Sigmoid colon (tissue), 7 donors: ENCODE measurements at regions of chr19 and their contacts with region 1.

Region 1: DNA sequence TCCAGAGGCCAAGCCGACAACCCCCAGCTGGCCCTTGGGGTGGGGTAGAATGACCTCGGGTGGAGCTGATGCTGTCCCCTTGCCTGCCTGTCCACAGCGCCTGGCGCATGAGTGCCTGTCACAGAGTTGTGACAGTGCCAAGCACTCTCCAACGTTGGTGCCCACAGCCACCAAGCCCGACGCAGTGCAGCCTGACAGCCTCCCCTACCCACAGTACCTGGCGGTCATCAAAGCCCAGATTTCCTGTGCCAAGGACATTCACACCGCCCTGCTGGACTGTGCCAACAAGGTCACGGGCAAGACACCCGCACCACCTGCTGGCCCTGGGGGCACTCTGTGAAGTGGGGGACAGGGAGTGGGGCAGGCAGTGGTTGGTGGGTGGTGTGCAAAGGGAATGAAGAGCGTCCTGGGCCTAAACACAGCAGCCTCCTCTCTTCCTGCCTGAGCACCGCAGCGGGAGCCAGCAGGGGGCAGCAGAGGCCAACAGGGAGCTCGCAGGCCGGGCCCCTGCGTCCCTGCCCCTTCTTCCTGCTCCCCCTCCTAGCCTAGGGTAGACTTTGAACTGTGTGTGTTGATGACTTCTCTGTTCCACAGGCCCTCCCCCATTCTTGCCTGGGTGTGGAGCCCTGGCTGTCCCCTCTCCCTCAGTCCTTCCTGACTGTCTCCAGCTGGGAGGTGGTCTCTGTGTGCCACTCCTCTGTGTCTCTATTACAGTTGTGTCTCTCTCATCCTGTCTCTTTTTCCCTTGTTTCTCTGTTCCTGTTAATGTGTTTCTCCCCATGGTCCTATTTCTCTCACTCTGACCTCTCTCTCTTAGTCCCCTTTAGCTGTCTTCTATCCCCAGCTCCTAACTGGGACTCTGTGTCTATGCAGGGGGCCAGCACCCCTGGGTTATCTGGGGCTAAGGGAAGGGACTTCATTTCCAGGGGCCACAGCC is 6.5 kb downstream of the MED29 start:
- DNase-seq: peak; percentile 96
- H3K4me3 ChIP-seq: no peak overlapping the region
- H3K27ac ChIP-seq: peak overlapping the region; percentile 91 to 100 (median 100)
- H3K4me1 ChIP-seq: peaks cover 0 to 41% (median 38%) of the 10 kb centered on the region in 4 donors
- H3K27me3 ChIP-seq: no peaks in the 10 kb centered on the region
- CTCF ChIP-seq: peak in 3 of 4 experiments; percentile 97 to 98 (median 97)
- EP300 ChIP-seq: no peak
- POLR2A ChIP-seq: peak in 1 of 2 donors; percentile 48

Region 2: GRCh38 chr19:38658462-38659306 is 738.9 kb before region 1 on chr19:
- intact Hi-C with region 1: loop called (anchors 10 kb)
- DNase-seq: peak; percentile 81
- H3K4me3 ChIP-seq: peak overlapping the region in 1 of 4 donors; percentile 11
- H3K27ac ChIP-seq: peak overlapping the region; percentile 96 to 100 (median 98)
- H3K4me1 ChIP-seq: peaks cover 0 to 96% (median 96%) of the 10 kb centered on the region in 4 donors
- H3K27me3 ChIP-seq: no peaks in the 10 kb centered on the region
- CTCF ChIP-seq: no peak
- EP300 ChIP-seq: peak in 3 of 4 donors; percentile 32 to 90 (median 47)
- POLR2A ChIP-seq: no peak

Region 3: DNA sequence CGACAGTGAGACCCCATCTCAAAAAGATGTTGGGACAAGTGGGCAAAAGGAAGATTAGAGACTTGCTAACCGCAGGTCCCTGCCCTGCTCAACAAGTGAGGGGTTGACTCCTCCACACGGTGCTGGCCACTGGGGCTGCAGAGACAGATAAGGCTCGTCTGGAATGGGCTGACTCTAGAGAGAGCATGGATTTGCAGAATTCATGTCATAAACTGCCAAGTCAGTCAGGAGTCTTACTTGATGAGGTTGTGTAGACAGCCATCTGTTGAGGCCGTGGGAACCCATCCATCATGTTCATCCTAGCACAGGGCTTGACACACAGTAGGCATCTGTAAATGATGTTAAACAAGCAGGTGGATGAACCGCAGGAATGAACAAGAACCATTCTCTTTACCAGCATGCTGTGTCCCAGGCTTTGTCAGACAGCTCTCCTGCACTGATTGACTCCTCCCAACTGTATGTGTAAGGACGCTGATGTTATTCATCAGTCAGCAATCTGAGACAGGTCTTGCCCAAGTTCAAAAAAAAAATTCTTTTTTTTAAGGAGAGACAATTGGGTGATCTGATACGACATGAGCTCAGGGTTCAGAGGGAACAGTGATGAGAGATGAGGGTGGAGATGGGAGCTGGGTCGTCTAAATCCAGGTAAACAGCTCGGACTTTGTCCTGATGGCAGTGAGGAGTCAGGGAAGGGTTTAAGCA is 15.6 kb before region 1 on chr19:
- intact Hi-C with region 1: no loop called
- DNase-seq: no peak
- H3K4me3 ChIP-seq: no peak overlapping the region
- H3K27ac ChIP-seq: no peak overlapping the region
- H3K4me1 ChIP-seq: no peaks in the 10 kb centered on the region
- H3K27me3 ChIP-seq: no peaks in the 10 kb centered on the region
- CTCF ChIP-seq: no peak
- EP300 ChIP-seq: no peak
- POLR2A ChIP-seq: no peak

Region 4: GRCh38 chr19:39412100-39412866 is 14.7 kb after region 1 on chr19 and contains the start of gene PLEKHG2:
- intact Hi-C with region 1: loop called (anchors 2 kb)
- DNase-seq: peak; percentile 100
- H3K4me3 ChIP-seq: peak within 1 kb of the TSS; percentile 83 to 99 (median 91)
- H3K27ac ChIP-seq: peak within 1 kb of the TSS; percentile 100
- H3K4me1 ChIP-seq: peaks cover 0 to 59% (median 47%) of the 10 kb centered on the region in 4 donors
- H3K27me3 ChIP-seq: no peaks in the 10 kb centered on the region
- CTCF ChIP-seq: peak; percentile 85 to 95 (median 90)
- EP300 ChIP-seq: peak in 2 of 4 donors; percentile 69 to 70
- POLR2A ChIP-seq: peak; percentile 60 to 89
- total RNA-seq, gene PLEKHG2: 8.2 to 28.8 (median 12.5) TPM

Region 5: GRCh38 chr19:39423258-39424086 is 25.8 kb after region 1 on chr19:
- intact Hi-C with region 1: no loop called
- DNase-seq: peak; percentile 64
- H3K4me3 ChIP-seq: no peak overlapping the region
- H3K27ac ChIP-seq: no peak overlapping the region
- H3K4me1 ChIP-seq: peaks cover 0 to 10% (median 9%) of the 10 kb centered on the region in 4 donors
- H3K27me3 ChIP-seq: no peaks in the 10 kb centered on the region
- CTCF ChIP-seq: no peak
- EP300 ChIP-seq: no peak
- POLR2A ChIP-seq: no peak

Region 6: DNA sequence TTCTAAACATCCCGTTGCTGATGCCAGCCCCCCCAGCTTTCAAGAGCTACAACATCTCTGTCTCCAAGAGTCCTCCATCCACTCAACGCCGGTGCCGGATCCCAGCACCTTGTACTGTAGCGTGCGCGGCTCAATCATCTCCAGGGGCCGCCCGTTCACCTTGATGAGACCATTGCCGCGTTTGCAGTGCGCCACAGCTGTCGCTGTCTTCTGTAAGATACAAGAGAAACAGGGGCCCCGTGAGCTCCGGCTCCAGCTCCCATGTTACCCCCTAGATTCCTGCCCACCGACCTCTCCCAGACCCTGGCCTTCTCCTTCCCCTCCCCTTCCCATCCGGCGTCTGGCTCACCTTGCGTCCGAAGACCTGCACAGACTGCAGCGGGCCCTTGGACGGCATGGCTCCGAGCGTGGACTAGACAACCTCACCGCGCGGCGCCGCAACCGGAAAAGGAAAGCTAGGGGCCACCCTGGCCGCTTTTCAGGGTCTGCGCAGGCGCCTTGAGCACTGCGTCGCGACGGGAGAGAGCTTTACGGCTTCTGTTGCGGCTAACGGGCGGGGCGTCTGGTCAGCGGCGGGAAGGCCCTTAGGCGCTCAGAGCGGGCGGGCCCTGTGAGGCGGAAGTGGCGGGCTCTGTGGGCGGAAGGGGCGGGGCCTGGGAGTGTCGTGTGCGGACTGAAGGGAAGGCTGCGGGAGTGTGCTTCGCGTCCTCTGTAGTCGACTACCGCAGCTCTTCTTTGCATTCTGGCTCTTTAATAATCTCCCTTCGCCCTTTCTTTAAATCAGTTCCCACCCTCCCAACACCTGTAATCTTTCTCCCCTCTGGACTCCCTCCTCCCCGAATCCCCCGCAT is 38.1 kb after region 1 on chr19 and contains the start of gene RPS16:
- intact Hi-C with region 1: loop called (anchors 2 kb)
- DNase-seq: peak; percentile 100
- H3K4me3 ChIP-seq: peak within 1 kb of the TSS; percentile 90 to 99 (median 96)
- H3K27ac ChIP-seq: peak within 1 kb of the TSS; percentile 89 to 95 (median 91)
- H3K4me1 ChIP-seq: peaks cover 0 to 34% (median 32%) of the 10 kb centered on the region in 4 donors
- H3K27me3 ChIP-seq: peaks cover 0 to 3% (median 0%) of the 10 kb centered on the region in 3 donors
- CTCF ChIP-seq: no peak
- EP300 ChIP-seq: peak in 1 of 4 donors; percentile 63
- POLR2A ChIP-seq: peak; percentile 94 to 98
- total RNA-seq, gene RPS16: 1,648 to 4,043 (median 3,423) TPM

Region 7: GRCh38 chr19:39532233-39533002 is 134.8 kb after region 1 on chr19 and contains the start of gene EID2B:
- intact Hi-C with region 1: loop called (anchors 5 kb)
- DNase-seq: peak; percentile 98
- H3K4me3 ChIP-seq: peak within 1 kb of the TSS; percentile 70 to 89 (median 78)
- H3K27ac ChIP-seq: peak within 1 kb of the TSS; percentile 86 to 94 (median 92)
- H3K4me1 ChIP-seq: peaks cover 0 to 26% (median 13%) of the 10 kb centered on the region in 4 donors
- H3K27me3 ChIP-seq: no peaks in the 10 kb centered on the region
- CTCF ChIP-seq: peak; percentile 94 to 99 (median 98)
- EP300 ChIP-seq: no peak
- POLR2A ChIP-seq: peak; percentile 44 to 74
- total RNA-seq, gene EID2B: 3.9 to 7.7 (median 5.3) TPM

Region 8: GRCh38 chr19:40716655-40717324 is 1319.2 kb after region 1 on chr19 and contains the starts of genes COQ8B and ITPKC:
- intact Hi-C with region 1: loop called (anchors 10 kb)
- DNase-seq: peak; percentile 100
- H3K4me3 ChIP-seq: peak within 1 kb of the TSS; percentile 74 to 92 (median 82)
- H3K27ac ChIP-seq: peak within 1 kb of the TSS; percentile 95 to 99 (median 98)
- H3K4me1 ChIP-seq: peaks cover 0 to 69% (median 56%) of the 10 kb centered on the region in 4 donors
- H3K27me3 ChIP-seq: no peaks in the 10 kb centered on the region
- CTCF ChIP-seq: peak in 1 of 4 experiments; percentile 32
- EP300 ChIP-seq: peak in 1 of 4 donors; percentile 74
- POLR2A ChIP-seq: peak; percentile 85 to 91
- total RNA-seq, gene COQ8B: 33.2 to 59.3 (median 39.2) TPM
- total RNA-seq, gene ITPKC: 17.7 to 39.6 (median 23.1) TPM